ENCODE measurements at regions of chr18 and their contacts with region 1.

Region 1: DNA sequence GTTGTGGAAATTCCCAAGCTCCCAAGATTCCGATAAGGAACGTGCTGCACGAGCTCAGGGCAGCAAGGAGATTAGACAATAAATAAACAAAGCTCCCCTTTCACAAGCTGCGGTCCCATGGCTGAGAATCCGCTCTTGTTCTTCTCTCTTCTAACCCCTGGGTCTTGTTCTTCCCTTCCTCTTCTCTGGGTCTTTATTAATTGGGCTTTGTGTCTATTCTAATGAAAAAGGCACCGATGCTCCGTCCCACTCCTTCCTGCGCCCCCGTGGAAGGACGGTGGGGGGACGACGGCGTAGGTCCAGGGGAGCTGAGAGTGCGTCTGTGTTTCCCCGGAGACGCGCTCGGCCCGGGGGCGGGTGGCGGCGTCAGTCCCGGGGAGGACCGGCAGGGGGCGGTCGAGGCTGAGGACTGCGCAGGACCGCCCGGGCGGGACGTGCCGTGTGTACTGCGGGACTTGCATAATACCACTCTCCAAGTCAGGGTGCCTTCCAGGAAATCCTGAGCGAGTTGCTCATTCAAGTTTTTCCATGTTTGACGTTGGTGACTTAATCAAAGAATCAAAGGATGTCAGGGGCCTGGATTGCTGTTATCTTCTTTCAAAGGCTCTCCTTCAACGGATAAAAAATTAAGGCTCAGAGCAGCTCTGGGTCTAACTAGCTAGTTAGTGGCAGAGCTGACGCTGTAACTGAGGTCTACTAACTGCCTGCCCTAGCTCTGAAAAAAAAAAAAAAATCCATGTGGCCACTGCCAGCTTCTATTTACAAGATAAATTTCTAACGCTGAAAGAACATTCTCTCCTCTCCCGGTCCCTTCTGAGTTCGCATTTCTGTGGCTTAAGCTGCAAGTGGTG is 321.4 kb downstream of the TGIF1 start:
- DNase-seq: peak; percentile 92
- H3K4me3 ChIP-seq: peak overlapping the region; percentile 18 to 39 (median 32)
- H3K27ac ChIP-seq: peak overlapping the region; percentile 48 to 71 (median 60)
- H3K4me1 ChIP-seq: peaks cover 0 to 13% (median 7%) of the 10 kb centered on the region in 4 donors
- H3K27me3 ChIP-seq: no peaks in the 10 kb centered on the region
- CTCF ChIP-seq: peak; percentile 89 to 96 (median 94)
- EP300 ChIP-seq: no peak
- POLR2A ChIP-seq: no peak

Region 2: DNA sequence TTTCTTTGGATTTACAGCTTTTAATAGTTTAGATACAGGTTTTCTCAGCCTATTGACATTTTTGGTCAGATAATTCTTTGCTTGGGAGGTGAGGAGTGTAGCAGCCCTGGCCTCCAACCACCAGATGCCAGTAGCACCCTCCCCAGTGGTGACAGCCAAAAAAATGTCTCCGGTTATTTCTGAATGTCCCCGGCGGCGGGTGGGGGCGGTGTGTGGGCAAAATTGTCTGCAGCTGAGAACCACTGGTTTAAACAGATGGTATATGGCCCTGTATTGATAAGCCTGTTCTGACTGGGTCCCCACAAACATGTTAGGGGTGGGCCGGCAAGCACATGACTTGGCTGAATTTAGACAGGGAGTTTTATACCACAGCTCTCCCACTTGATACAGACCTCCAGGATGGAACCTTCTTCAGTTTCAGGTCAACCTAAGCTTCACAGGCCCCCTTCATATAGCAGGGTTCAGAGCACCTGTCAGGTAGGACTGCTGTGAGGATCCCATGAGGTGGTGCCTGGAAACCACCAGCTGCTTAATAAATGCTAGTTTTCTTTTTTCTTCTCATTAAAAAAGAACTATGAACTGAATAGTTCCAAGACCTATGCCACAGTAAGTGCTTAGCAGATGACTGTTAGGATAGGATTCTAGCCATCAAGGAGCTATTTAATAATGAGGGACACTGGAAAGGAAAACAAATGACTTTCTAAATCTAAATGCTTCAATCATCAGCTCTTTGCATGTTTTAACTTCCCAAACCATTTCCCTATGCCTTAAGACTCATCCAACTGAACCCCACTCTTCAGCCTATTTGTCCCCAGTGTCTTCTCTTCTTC is 776.5 kb before region 1 on chr18:
- intact Hi-C with region 1: no loop called
- DNase-seq: no peak
- H3K4me3 ChIP-seq: no peak overlapping the region
- H3K27ac ChIP-seq: no peak overlapping the region
- H3K4me1 ChIP-seq: peaks cover 0 to 40% (median 26%) of the 10 kb centered on the region in 4 donors
- H3K27me3 ChIP-seq: no peaks in the 10 kb centered on the region
- CTCF ChIP-seq: no peak
- EP300 ChIP-seq: no peak
- POLR2A ChIP-seq: no peak

Region 3: GRCh38 chr18:3869848-3870247 is 98.5 kb after region 1 on chr18:
- intact Hi-C with region 1: loop called (anchors 1 kb)
- DNase-seq: no peak
- H3K4me3 ChIP-seq: no peak overlapping the region
- H3K27ac ChIP-seq: no peak overlapping the region
- H3K4me1 ChIP-seq: no peaks in the 10 kb centered on the region
- H3K27me3 ChIP-seq: no peaks in the 10 kb centered on the region
- CTCF ChIP-seq: peak in 3 of 4 experiments; percentile 14 to 37 (median 17)
- EP300 ChIP-seq: no peak
- POLR2A ChIP-seq: no peak

Region 4: DNA sequence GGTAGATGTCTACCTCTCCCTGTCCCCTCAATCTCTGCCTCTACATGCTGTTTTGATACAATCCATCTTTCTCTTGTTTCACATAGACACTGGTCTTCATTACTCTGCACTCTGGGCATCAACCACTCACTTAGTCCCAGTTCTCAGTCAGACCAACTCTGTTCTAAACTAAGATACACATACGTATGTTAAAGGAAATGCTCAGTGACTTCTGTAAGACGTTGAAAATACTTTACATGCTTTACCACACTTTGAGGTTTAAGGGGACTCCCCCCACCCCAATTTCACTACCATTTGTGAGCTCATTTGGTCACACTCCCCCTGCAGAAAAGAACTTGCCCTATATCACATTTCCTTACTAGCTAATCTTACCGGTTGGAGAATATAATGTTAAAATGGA is 176.0 kb after region 1 on chr18:
- intact Hi-C with region 1: no loop called
- DNase-seq: no peak
- H3K4me3 ChIP-seq: no peak overlapping the region
- H3K27ac ChIP-seq: no peak overlapping the region
- H3K4me1 ChIP-seq: no peaks in the 10 kb centered on the region
- H3K27me3 ChIP-seq: no peaks in the 10 kb centered on the region
- CTCF ChIP-seq: no peak
- EP300 ChIP-seq: no peak
- POLR2A ChIP-seq: no peak

Region 5: GRCh38 chr18:3995476-3996102 is 224.2 kb after region 1 on chr18:
- intact Hi-C with region 1: loop called (anchors 1 kb)
- DNase-seq: no peak
- H3K4me3 ChIP-seq: no peak overlapping the region
- H3K27ac ChIP-seq: no peak overlapping the region
- H3K4me1 ChIP-seq: no peaks in the 10 kb centered on the region
- H3K27me3 ChIP-seq: no peaks in the 10 kb centered on the region
- CTCF ChIP-seq: peak in 2 of 4 experiments; percentile 52 to 77
- EP300 ChIP-seq: no peak
- POLR2A ChIP-seq: no peak

Region 6: GRCh38 chr18:4068552-4069158 is 297.3 kb after region 1 on chr18:
- intact Hi-C with region 1: loop called (anchors 5 kb)
- DNase-seq: no peak
- H3K4me3 ChIP-seq: no peak overlapping the region
- H3K27ac ChIP-seq: no peak overlapping the region
- H3K4me1 ChIP-seq: no peaks in the 10 kb centered on the region
- H3K27me3 ChIP-seq: no peaks in the 10 kb centered on the region
- CTCF ChIP-seq: peak in 2 of 4 experiments; percentile 38 to 63
- EP300 ChIP-seq: no peak
- POLR2A ChIP-seq: no peak

Region 7: DNA sequence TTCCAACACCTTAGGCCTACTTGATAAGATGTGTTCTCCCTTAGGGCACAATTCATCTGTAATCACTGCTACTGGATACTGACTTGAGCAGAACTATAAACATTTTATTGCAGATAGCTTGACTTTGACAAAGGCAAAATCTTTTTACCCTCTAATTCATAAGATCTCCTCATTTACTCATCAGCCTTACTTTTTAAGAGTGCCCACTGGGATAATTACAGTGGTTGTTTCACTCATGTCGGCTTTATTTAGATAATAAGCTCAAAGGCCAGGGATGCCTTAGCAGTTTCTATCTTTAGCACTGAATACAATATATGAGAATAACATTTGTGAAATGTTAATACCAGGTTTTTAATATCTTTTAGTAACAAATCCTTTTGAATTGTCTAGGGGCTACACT is 539.8 kb after region 1 on chr18:
- intact Hi-C with region 1: no loop called
- DNase-seq: no peak
- H3K4me3 ChIP-seq: no peak overlapping the region
- H3K27ac ChIP-seq: no peak overlapping the region
- H3K4me1 ChIP-seq: no peaks in the 10 kb centered on the region
- H3K27me3 ChIP-seq: no peaks in the 10 kb centered on the region
- CTCF ChIP-seq: no peak
- EP300 ChIP-seq: no peak
- POLR2A ChIP-seq: no peak

Measured in sigmoid colon (tissue), 7 donors.